ENCODE measurements at regions of chr10 and their contacts with region 1.

Region 1: GRCh38 chr10:95374597-95375209 is 83.9 kb upstream of the PDLIM1 start:
- DNase-seq: no peak
- ATAC-seq: peak; percentile 99
- H3K4me3 ChIP-seq: no peak overlapping the region
- H3K27ac ChIP-seq: no peak overlapping the region
- H3K4me1 ChIP-seq: peaks cover 16% of the 10 kb centered on the region
- H3K27me3 ChIP-seq: peaks cover 0 to 3% of the 10 kb centered on the region in 2 experiments; a peak in 1 of 4 replicates
- CTCF ChIP-seq: peak; percentile 94 to 96 (median 96)
- EP300 ChIP-seq: no peak
- POLR2A ChIP-seq: no peak
- RAD21 ChIP-seq: peak; percentile 97

Region 2: GRCh38 chr10:95133016-95133752 is 241.5 kb before region 1 on chr10:
- CTCF ChIA-PET with region 1: interaction called, 8 read pairs
- POLR2A ChIA-PET with region 1: no interaction called
- RAD21 ChIA-PET with region 1: interaction called, 10 read pairs
- SMC1A ChIA-PET with region 1: interaction called, 5 read pairs
- in situ Hi-C with region 1: no loop called
- intact Hi-C with region 1: no loop called
- DNase-seq: peak; percentile 45
- ATAC-seq: peak; percentile 99
- H3K4me3 ChIP-seq: no peak overlapping the region
- H3K27ac ChIP-seq: no peak overlapping the region
- H3K4me1 ChIP-seq: no peaks in the 10 kb centered on the region
- H3K27me3 ChIP-seq: no peaks in the 10 kb centered on the region
- CTCF ChIP-seq: peak; percentile 71 to 83 (median 79)
- EP300 ChIP-seq: no peak
- POLR2A ChIP-seq: no peak
- RAD21 ChIP-seq: peak; percentile 86

Region 3: GRCh38 chr10:95246579-95247051 is 128.1 kb before region 1 on chr10:
- CTCF ChIA-PET with region 1: interaction called, 11 read pairs
- POLR2A ChIA-PET with region 1: no interaction called
- RAD21 ChIA-PET with region 1: interaction called, 5 read pairs
- SMC1A ChIA-PET with region 1: interaction called, 13 read pairs
- in situ Hi-C with region 1: no loop called
- intact Hi-C with region 1: no loop called
- DNase-seq: no peak
- ATAC-seq: peak; percentile 81
- H3K4me3 ChIP-seq: no peak overlapping the region
- H3K27ac ChIP-seq: peak overlapping the region; percentile 78
- H3K4me1 ChIP-seq: peaks cover 47% of the 10 kb centered on the region
- H3K27me3 ChIP-seq: no peaks in the 10 kb centered on the region
- CTCF ChIP-seq: peak; percentile 77 to 85 (median 78)
- EP300 ChIP-seq: no peak
- POLR2A ChIP-seq: no peak
- RAD21 ChIP-seq: peak; percentile 77

Region 4: DNA sequence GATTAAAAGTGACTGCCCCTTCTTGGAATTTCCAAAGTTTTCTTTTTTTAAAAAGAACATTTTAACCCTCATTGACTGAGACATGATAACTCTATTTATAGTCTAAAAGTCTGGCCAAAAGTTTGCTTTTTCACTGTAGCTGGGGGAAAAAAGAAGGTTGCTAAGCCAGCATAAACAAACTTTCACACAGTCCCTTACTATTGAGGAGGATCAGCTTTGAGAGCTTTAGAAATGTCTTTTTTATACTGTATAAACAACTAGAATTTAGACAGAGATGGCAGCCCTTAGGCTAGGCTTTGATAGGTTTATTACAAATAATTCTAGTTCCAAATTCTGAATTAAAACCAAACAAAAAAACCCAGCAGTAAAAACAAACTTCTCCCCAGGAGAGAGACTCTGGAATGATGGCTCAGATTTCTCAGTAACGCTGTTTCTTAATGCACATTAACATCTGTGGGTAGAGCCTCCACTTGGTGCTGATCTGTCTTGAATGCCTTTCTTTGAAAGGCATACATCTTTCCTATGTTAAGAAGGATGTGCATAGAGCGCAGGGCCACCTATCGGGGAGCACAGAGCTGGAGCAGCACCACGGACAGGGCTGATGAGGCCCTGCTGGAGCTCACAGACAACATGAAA is 17.0 kb after region 1 on chr10:
- CTCF ChIA-PET with region 1: interaction called, 100 read pairs
- POLR2A ChIA-PET with region 1: interaction called, 13 read pairs
- RAD21 ChIA-PET with region 1: interaction called, 67 read pairs
- SMC1A ChIA-PET with region 1: interaction called, 153 read pairs
- in situ Hi-C with region 1: no loop called
- intact Hi-C with region 1: no loop called
- DNase-seq: no peak
- ATAC-seq: peak; percentile 32
- H3K4me3 ChIP-seq: no peak overlapping the region
- H3K27ac ChIP-seq: no peak overlapping the region
- H3K4me1 ChIP-seq: peaks cover 51% of the 10 kb centered on the region
- H3K27me3 ChIP-seq: no peaks in the 10 kb centered on the region
- CTCF ChIP-seq: peak in 2 of 3 experiments; percentile 3 to 18; a peak in 1 of 6 replicates
- EP300 ChIP-seq: no peak
- POLR2A ChIP-seq: no peak
- RAD21 ChIP-seq: no peak

Region 5: GRCh38 chr10:95406651-95407280 is 32.1 kb after region 1 on chr10:
- CTCF ChIA-PET with region 1: interaction called, 48 read pairs
- POLR2A ChIA-PET with region 1: no interaction called
- RAD21 ChIA-PET with region 1: interaction called, 17 read pairs
- SMC1A ChIA-PET with region 1: interaction called, 39 read pairs
- in situ Hi-C with region 1: no loop called
- intact Hi-C with region 1: no loop called
- DNase-seq: no peak
- ATAC-seq: no peak
- H3K4me3 ChIP-seq: no peak overlapping the region
- H3K27ac ChIP-seq: no peak overlapping the region
- H3K4me1 ChIP-seq: no peaks in the 10 kb centered on the region
- H3K27me3 ChIP-seq: no peaks in the 10 kb centered on the region; a peak in 1 of 4 replicates
- CTCF ChIP-seq: no peak
- EP300 ChIP-seq: no peak
- POLR2A ChIP-seq: no peak
- RAD21 ChIP-seq: no peak

Region 6: DNA sequence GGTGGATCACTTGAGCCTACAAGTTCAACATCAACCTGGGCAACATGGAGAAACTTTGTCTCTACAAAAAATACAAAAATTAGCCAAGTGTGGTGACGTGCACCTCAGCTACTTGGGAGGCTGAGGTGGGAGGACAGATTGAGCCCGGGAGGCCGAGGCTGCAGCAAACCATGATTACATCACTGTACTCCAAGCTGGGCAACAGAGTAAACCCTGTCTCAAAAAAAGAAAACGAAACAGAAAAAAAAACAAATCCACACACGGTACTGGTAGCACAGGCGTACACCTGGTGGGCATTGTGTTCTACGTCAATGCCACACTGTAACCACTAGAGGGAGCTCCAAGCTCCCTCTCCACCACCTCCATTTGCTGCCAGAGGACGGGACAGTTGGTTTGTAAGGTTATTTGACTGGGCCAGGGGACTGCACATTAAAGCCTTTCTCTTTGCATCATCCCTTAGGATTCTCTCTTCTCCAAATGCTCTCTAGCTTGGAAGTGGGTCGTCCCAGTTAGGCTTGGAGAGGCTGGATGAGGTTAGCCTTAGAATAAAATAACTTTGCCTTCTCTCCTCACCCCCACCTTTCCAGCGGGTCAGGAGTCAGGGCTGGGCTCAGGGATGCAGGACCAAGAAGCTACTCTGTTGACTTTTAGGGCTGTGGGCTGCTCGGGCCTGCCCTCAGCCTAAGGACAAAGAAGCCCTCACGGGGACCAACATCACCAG is 55.7 kb after region 1 on chr10:
- CTCF ChIA-PET with region 1: interaction called, 126 read pairs
- POLR2A ChIA-PET with region 1: interaction called, 4 read pairs
- RAD21 ChIA-PET with region 1: interaction called, 54 read pairs
- SMC1A ChIA-PET with region 1: interaction called, 81 read pairs
- in situ Hi-C with region 1: no loop called
- intact Hi-C with region 1: loop called (anchors 5 kb)
- DNase-seq: peak; percentile 30
- ATAC-seq: peak; percentile 93
- H3K4me3 ChIP-seq: no peak overlapping the region
- H3K27ac ChIP-seq: no peak overlapping the region
- H3K4me1 ChIP-seq: peaks cover 7% of the 10 kb centered on the region
- H3K27me3 ChIP-seq: no peaks in the 10 kb centered on the region; a peak in 1 of 4 replicates
- CTCF ChIP-seq: peak; percentile 93 to 96 (median 93)
- EP300 ChIP-seq: no peak
- POLR2A ChIP-seq: no peak
- RAD21 ChIP-seq: peak; percentile 88

Region 7: DNA sequence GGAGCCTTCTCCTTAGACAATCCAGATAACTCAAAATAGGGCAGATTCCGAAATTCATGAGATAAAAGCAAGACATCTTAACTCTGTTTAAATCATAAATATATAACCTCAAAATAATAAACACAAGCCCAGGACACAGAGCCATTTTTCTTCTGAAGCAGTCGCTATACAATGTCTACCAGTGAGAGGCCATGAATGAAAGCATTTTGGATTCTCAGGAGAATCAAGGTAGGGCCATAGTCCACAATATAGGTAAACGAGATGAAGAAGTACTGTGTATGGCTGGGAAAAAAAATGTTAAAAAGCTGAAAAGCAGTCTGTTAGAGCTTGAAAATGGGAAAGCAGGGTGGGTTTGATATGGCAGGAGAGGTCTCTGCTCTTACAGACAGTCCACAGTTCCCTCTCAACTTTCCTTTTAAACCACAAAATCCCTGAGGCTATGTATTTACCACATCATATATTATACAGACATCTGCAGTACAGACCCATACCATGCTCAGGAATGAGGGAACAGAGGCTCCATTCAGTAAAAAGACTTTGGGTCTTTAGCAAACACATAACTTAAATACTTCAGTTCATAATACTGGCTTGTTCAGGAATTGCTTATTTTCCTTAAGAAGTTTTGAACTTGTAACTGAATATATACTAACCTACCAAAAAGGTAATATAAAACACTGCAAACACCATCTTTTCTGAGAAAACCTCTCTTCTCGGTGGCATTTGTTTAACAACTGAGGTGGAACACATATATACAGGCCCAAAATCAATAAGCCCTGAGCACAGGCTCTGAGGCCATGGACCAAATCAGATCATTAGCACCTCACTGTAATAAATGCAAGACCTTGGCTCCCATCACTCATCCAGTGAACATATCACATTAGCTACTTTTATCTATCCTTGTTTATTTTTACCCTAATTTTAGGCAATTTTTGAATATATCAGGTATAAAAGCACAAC is 77.1 kb after region 1 on chr10:
- CTCF ChIA-PET with region 1: interaction called, 204 read pairs
- POLR2A ChIA-PET with region 1: no interaction called
- RAD21 ChIA-PET with region 1: interaction called, 59 read pairs
- SMC1A ChIA-PET with region 1: interaction called, 122 read pairs
- in situ Hi-C with region 1: no loop called
- intact Hi-C with region 1: no loop called
- DNase-seq: no peak
- ATAC-seq: no peak
- H3K4me3 ChIP-seq: no peak overlapping the region
- H3K27ac ChIP-seq: no peak overlapping the region
- H3K4me1 ChIP-seq: no peaks in the 10 kb centered on the region
- H3K27me3 ChIP-seq: no peaks in the 10 kb centered on the region; a peak in 1 of 4 replicates
- CTCF ChIP-seq: no peak
- EP300 ChIP-seq: no peak
- POLR2A ChIP-seq: no peak
- RAD21 ChIP-seq: no peak

Region 8: DNA sequence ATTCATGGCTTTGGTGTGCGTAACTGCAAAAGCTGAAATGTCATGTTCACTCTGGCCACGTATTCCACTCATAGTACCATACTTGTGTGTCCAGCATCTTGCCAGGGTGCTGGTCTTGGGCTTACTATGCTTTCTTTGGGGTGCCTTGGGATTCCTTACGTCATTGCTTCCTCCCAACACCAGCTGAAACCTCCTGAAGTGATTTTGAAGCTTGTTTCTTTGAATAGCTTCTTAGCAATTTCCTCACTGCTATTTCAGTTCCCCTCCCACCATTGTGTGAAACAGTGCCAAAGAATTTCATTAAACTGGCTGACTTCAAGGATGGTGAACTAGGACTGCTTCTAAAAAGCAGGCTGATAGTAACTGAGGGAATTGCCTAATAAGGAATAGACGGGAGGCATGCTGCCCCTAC is 418.2 kb after region 1 on chr10:
- CTCF ChIA-PET with region 1: no interaction called
- POLR2A ChIA-PET with region 1: no interaction called
- RAD21 ChIA-PET with region 1: no interaction called
- SMC1A ChIA-PET with region 1: no interaction called
- in situ Hi-C with region 1: no loop called
- intact Hi-C with region 1: no loop called
- DNase-seq: peak; percentile 77
- ATAC-seq: peak; percentile 31
- H3K4me3 ChIP-seq: peak overlapping the region; percentile 18; the same call in 1 of the 2 replicates
- H3K27ac ChIP-seq: peak overlapping the region; percentile 93
- H3K4me1 ChIP-seq: peaks cover 64% of the 10 kb centered on the region
- H3K27me3 ChIP-seq: no peaks in the 10 kb centered on the region
- CTCF ChIP-seq: no peak
- EP300 ChIP-seq: peak; percentile 54; a peak in 1 of 4 replicates
- POLR2A ChIP-seq: no peak
- RAD21 ChIP-seq: 0 out of 2 replicates have a peak, but pooled peaks have one; percentile 4

Region 9: DNA sequence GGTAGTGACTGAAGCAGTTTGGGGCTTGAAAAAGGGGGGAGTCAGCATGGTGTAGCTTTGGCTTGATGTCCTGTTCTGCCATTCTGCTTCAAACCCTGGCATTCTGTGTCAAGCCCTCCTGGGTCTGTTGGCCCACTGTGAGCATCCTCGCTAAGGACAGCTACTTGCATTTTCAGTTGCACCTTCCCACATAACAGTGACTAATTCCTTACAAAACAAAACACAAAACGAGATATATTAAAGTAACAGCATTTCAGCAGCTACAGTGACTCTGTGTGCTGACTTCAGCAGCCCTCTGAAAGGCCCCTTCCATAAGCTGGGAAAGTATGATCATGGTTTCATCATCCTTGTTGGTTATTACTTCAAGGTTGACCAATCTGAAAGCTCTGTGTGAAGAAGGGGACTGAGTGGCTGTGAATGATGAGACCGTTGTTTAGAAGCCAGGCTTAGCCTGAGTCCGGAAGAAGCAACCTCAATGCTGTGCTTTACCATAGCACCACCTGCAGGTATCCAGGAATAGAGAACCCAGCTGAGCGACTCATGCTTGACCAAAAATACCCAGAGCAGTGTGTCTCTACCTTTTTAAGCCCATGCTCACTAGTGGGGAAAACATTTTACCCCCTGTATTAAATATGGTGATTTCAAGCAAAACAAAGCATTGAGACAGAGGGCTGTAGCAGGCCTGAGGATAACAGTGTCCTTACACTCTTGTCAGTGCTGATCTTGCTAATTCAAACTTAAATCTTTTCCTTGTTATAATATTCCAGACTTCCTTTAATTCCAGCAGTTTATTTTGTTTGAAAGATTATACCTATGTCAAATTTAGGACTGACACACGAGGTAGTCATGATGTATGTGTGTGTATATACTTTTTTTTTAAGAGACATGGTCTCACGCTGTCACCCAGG is 490.5 kb after region 1 on chr10:
- CTCF ChIA-PET with region 1: no interaction called
- POLR2A ChIA-PET with region 1: no interaction called
- RAD21 ChIA-PET with region 1: no interaction called
- SMC1A ChIA-PET with region 1: no interaction called
- in situ Hi-C with region 1: no loop called
- intact Hi-C with region 1: no loop called
- DNase-seq: peak; percentile 42
- ATAC-seq: peak; percentile 91
- H3K4me3 ChIP-seq: no peak overlapping the region
- H3K27ac ChIP-seq: peak overlapping the region; percentile 40; the same call in 1 of the 2 replicates
- H3K4me1 ChIP-seq: peaks cover 9% of the 10 kb centered on the region; the same call in 1 of the 2 replicates
- H3K27me3 ChIP-seq: no peaks in the 10 kb centered on the region
- CTCF ChIP-seq: peak; percentile 66 to 77 (median 70); a peak in 5 of 6 replicates
- EP300 ChIP-seq: no peak
- POLR2A ChIP-seq: no peak
- RAD21 ChIP-seq: peak; percentile 80